ENCODE measurements at regions of chr5 and their contacts with region 1.

Region 1: DNA sequence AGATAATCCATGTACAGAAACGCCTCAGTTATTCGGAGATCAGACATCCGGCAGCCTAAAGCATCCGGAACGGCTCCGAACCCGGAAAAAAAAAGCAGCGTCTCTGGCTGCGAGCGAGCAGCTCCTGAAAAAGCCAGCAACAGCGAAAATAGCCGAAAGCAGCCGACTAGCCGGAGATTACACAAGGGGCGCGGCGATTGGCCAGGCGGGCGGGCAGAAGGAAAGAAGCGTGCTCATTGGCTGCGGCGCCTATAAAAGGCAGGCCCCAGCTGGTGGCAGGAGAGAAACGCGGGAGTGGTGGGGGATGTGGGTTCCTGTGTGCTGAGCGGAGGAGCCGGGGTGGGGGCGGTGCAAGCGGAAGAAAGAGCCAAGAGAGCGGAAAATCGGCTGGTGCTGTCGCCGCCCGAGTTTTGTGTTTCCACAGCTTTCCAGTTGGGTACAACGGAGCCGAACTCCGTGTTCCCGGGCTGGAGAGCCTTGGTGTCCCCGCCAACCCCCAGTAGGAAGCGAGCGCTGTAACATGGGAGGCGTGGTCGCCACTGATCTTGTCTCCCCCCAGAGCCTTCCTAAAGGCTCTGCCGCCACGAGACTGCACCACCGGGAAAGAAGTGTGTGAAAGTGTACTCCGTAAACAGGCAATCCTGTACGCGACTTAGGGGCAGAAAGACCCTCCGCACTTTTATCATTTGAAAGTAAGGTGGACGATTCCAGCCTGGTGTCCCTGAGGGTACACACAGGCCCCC is at the start of gene ARL15:
- DNase-seq: peak; percentile 87
- ATAC-seq: peak; percentile 95
- H3K4me3 ChIP-seq: peak within 1 kb of the TSS; percentile 90
- H3K27ac ChIP-seq: peak within 1 kb of the TSS; percentile 49
- H3K4me1 ChIP-seq: no peaks in the 10 kb centered on the region
- H3K27me3 ChIP-seq: no peaks in the 10 kb centered on the region
- CTCF ChIP-seq: no peak
- EP300 ChIP-seq: 0 out of 4 replicates have a peak, but pooled peaks of 1 of the 2 experiments have one; percentile 17
- POLR2A ChIP-seq: peak; percentile 100
- RAD21 ChIP-seq: no peak
- polyA plus RNA-seq, gene ARL15: 3.6 to 3.7 TPM

Region 2: GRCh38 chr5:54115735-54116403 is 194.7 kb before region 1 on chr5:
- CTCF ChIA-PET with region 1: no interaction called
- POLR2A ChIA-PET with region 1: no interaction called
- RAD21 ChIA-PET with region 1: no interaction called
- SMC1A ChIA-PET with region 1: no interaction called
- in situ Hi-C with region 1: no loop called
- intact Hi-C with region 1: no loop called
- DNase-seq: no peak
- ATAC-seq: no peak; the same call in 2 of the 3 replicates
- H3K4me3 ChIP-seq: no peak overlapping the region
- H3K27ac ChIP-seq: no peak overlapping the region
- H3K4me1 ChIP-seq: peaks cover 6% of the 10 kb centered on the region
- H3K27me3 ChIP-seq: no peaks in the 10 kb centered on the region
- CTCF ChIP-seq: no peak
- EP300 ChIP-seq: no peak
- POLR2A ChIP-seq: no peak
- RAD21 ChIP-seq: no peak

Region 3: GRCh38 chr5:54171645-54172384 is 138.8 kb before region 1 on chr5:
- CTCF ChIA-PET with region 1: no interaction called
- POLR2A ChIA-PET with region 1: no interaction called
- RAD21 ChIA-PET with region 1: no interaction called
- SMC1A ChIA-PET with region 1: no interaction called
- in situ Hi-C with region 1: no loop called
- intact Hi-C with region 1: no loop called
- DNase-seq: no peak
- ATAC-seq: peak; percentile 83
- H3K4me3 ChIP-seq: no peak overlapping the region
- H3K27ac ChIP-seq: no peak overlapping the region
- H3K4me1 ChIP-seq: no peaks in the 10 kb centered on the region
- H3K27me3 ChIP-seq: no peaks in the 10 kb centered on the region
- CTCF ChIP-seq: no peak
- EP300 ChIP-seq: no peak
- POLR2A ChIP-seq: no peak
- RAD21 ChIP-seq: no peak

Region 4: GRCh38 chr5:54243473-54244080 is 67.0 kb before region 1 on chr5:
- CTCF ChIA-PET with region 1: interaction called, 16 read pairs
- POLR2A ChIA-PET with region 1: interaction called, 3 read pairs
- RAD21 ChIA-PET with region 1: interaction called, 11 read pairs
- SMC1A ChIA-PET with region 1: interaction called, 9 read pairs
- in situ Hi-C with region 1: no loop called
- intact Hi-C with region 1: loop called (anchors 5 kb)
- DNase-seq: no peak
- ATAC-seq: peak; percentile 84
- H3K4me3 ChIP-seq: no peak overlapping the region
- H3K27ac ChIP-seq: no peak overlapping the region
- H3K4me1 ChIP-seq: no peaks in the 10 kb centered on the region
- H3K27me3 ChIP-seq: no peaks in the 10 kb centered on the region
- CTCF ChIP-seq: peak; percentile 57 to 72 (median 72); a peak in 5 of 6 replicates
- EP300 ChIP-seq: no peak
- POLR2A ChIP-seq: no peak
- RAD21 ChIP-seq: peak; percentile 86

Region 5: DNA sequence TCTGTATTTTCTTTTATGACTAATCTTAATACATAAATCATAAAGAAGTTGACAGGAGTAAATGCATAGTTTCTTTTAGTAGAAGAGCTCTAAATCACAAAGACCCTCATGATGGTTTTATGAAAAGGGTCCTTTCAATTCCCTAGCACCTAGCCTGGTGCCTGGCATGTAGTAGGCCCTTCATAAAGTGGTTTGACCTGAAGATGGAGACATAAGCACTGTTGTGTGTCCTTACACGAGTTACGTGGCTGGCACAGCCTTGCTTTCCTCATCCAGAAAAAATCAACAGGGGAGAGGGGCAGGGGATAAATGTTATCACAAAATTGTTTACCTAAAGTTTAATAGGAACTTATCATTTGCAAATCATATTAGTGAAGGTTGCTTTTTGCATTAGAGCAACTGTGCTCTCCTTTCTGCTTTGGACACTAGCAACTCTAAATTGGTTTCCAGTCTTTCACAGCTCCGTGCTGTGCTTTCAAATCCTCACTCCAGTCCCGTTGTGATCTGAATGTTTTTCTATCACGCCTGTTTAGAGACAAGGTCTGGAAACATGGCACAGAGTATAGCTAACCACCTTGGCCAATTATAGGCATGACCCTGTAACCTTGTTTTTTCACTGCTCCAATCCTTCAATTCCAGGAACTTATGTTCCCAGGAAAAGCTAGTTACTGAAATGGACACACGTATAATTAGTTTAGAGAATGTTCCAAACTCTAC is 56.0 kb before region 1 on chr5:
- CTCF ChIA-PET with region 1: interaction called, 15 read pairs
- POLR2A ChIA-PET with region 1: no interaction called
- RAD21 ChIA-PET with region 1: interaction called, 3 read pairs
- SMC1A ChIA-PET with region 1: interaction called, 6 read pairs
- in situ Hi-C with region 1: no loop called
- intact Hi-C with region 1: loop called (anchors 5 kb)
- DNase-seq: no peak
- ATAC-seq: no peak
- H3K4me3 ChIP-seq: no peak overlapping the region
- H3K27ac ChIP-seq: no peak overlapping the region
- H3K4me1 ChIP-seq: peaks cover 3% of the 10 kb centered on the region
- H3K27me3 ChIP-seq: no peaks in the 10 kb centered on the region
- CTCF ChIP-seq: peak in 1 of 3 experiments; percentile 15; a peak in 1 of 6 replicates
- EP300 ChIP-seq: no peak
- POLR2A ChIP-seq: no peak
- RAD21 ChIP-seq: no peak

Region 6: GRCh38 chr5:54390015-54390414 is 79.4 kb after region 1 on chr5:
- CTCF ChIA-PET with region 1: interaction called, 6 read pairs
- POLR2A ChIA-PET with region 1: interaction called, 11 read pairs
- RAD21 ChIA-PET with region 1: interaction called, 9 read pairs
- SMC1A ChIA-PET with region 1: interaction called, 11 read pairs
- in situ Hi-C with region 1: no loop called
- intact Hi-C with region 1: no loop called
- DNase-seq: no peak
- ATAC-seq: no peak
- H3K4me3 ChIP-seq: no peak overlapping the region
- H3K27ac ChIP-seq: no peak overlapping the region
- H3K4me1 ChIP-seq: no peaks in the 10 kb centered on the region
- H3K27me3 ChIP-seq: no peaks in the 10 kb centered on the region
- CTCF ChIP-seq: no peak
- EP300 ChIP-seq: no peak
- POLR2A ChIP-seq: no peak
- RAD21 ChIP-seq: no peak

Region 7: DNA sequence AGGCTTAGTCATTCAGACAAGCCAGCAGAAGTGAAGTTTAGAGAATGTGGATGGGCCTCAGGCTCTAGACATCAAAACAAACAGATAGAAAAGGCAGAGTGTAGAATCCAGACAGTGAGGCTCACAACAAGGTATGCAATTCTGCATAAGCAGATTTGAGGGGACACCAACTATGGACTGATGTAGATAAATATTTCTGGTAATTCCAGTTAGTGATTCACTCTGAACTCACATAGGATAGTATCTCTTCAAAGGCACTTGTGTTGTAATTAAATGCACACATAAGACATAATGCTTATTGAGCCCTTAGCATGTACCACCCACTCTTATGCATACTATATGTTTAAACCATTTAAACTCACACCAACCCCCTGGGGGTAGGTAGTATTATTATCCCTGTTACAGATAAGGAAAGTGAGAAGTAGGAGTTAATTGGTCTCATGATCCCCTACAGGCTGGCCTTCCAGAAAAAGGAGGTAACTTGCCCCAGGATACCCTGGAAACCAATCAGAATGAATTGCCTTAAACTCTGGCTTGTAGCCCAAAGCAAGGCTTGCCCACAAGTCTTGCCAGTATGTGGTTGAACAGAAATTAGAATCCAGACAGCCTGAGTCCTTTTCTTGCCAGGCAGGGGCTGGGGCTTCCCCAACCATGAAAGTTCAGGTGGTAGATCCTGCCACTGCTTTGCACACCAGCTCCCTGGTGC is 105.4 kb after region 1 on chr5:
- CTCF ChIA-PET with region 1: interaction called, 30 read pairs
- POLR2A ChIA-PET with region 1: interaction called, 7 read pairs
- RAD21 ChIA-PET with region 1: interaction called, 26 read pairs
- SMC1A ChIA-PET with region 1: interaction called, 34 read pairs
- in situ Hi-C with region 1: no loop called
- intact Hi-C with region 1: loop called (anchors 5 kb)
- DNase-seq: no peak
- ATAC-seq: peak; percentile 46
- H3K4me3 ChIP-seq: no peak overlapping the region
- H3K27ac ChIP-seq: no peak overlapping the region
- H3K4me1 ChIP-seq: no peaks in the 10 kb centered on the region
- H3K27me3 ChIP-seq: no peaks in the 10 kb centered on the region; a peak in 1 of 4 replicates
- CTCF ChIP-seq: no peak
- EP300 ChIP-seq: no peak
- POLR2A ChIP-seq: no peak
- RAD21 ChIP-seq: no peak

Region 8: DNA sequence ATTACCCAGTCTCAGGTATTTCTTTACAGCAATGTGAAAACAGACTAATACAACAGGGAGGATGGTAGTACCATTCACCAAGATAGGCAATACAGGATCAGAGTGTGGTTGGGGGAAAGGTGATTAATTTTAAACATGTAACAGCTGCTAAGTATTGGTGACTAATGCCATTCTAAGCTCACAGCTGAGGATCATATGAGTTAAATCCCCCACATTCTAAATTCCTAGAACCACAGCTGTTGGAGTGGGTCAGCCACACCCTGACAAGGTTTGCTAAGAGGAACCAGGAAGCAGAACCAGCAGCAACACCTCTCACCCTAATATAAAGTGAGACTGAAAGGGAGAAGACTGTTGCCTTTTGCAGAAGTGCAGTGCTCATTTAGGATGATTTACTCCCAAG is 169.7 kb after region 1 on chr5:
- CTCF ChIA-PET with region 1: no interaction called
- POLR2A ChIA-PET with region 1: no interaction called
- RAD21 ChIA-PET with region 1: no interaction called
- SMC1A ChIA-PET with region 1: no interaction called
- in situ Hi-C with region 1: no loop called
- intact Hi-C with region 1: loop called (anchors 5 kb)
- DNase-seq: no peak
- ATAC-seq: no peak
- H3K4me3 ChIP-seq: no peak overlapping the region
- H3K27ac ChIP-seq: no peak overlapping the region
- H3K4me1 ChIP-seq: no peaks in the 10 kb centered on the region
- H3K27me3 ChIP-seq: no peaks in the 10 kb centered on the region
- CTCF ChIP-seq: no peak
- EP300 ChIP-seq: no peak
- POLR2A ChIP-seq: no peak
- RAD21 ChIP-seq: no peak

Region 9: DNA sequence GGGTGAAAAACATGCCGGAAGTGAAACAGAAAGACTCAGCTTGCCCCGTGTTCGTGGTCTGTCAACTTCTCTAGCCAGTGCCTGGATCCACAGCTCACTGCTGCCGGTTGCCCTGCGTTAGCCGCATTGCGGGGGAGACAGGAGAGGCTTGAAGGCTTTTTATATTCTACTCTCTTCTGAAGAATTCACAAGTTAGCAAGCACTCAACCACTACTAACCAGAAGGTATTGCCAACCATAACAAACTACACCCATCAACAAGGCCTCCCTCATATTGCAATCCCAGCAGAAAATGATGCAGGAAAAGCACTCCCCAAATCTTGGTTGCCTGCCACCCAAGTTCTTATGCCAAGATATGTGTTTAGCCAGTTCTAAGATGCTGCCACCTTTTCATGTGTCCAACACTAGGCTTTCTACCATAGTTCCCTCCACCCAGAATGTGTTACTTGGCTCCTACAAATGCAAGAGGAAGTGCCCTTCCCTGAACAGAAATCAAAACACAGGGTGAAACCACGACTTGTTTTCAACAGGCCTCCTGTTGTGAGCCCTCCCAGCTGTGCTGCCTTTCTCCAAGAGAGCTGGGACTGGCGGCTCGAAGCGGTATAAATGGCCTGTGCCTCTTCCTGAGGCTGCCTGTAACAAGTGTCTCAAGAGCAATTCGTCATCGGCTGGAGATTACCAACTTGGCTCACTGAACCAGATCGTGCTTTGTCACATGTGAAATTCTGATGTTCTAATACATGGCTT is 335.9 kb after region 1 on chr5:
- CTCF ChIA-PET with region 1: no interaction called
- POLR2A ChIA-PET with region 1: no interaction called
- RAD21 ChIA-PET with region 1: no interaction called
- SMC1A ChIA-PET with region 1: no interaction called
- in situ Hi-C with region 1: no loop called
- intact Hi-C with region 1: no loop called
- DNase-seq: peak; percentile 48
- ATAC-seq: peak; percentile 96
- H3K4me3 ChIP-seq: peak overlapping the region; percentile 5; the same call in 1 of the 2 replicates
- H3K27ac ChIP-seq: peak overlapping the region; percentile 50; the same call in 1 of the 2 replicates
- H3K4me1 ChIP-seq: peaks cover 20% of the 10 kb centered on the region
- H3K27me3 ChIP-seq: no peaks in the 10 kb centered on the region
- CTCF ChIP-seq: no peak
- EP300 ChIP-seq: peak in 1 of 2 experiments; percentile 39; a peak in 1 of 4 replicates
- POLR2A ChIP-seq: no peak
- RAD21 ChIP-seq: no peak

Measured in GM12878 (cell line).